ENCODE measurements at regions of chr15 and their contacts with region 1.

Region 1: GRCh38 chr15:80152180-80152845 is 486 bp upstream of the FAH start:
- DNase-seq: peak; percentile 46 to 86 (median 69)
- ATAC-seq: peak; percentile 84
- H3K4me3 ChIP-seq: peak overlapping the region; percentile 46
- H3K4me3 Mint-ChIP-seq: peak overlapping the region; percentile 73 to 97 (median 88)
- H3K27ac ChIP-seq: peak overlapping the region; percentile 64
- H3K27ac Mint-ChIP-seq: peak overlapping the region; percentile 70 to 90 (median 83)
- H3K4me1 ChIP-seq: peaks cover 0 to 7% of the 10 kb centered on the region in 2 donors
- H3K4me1 Mint-ChIP-seq: peaks cover 0 to 36% (median 22%) of the 10 kb centered on the region in 7 donors
- H3K27me3 ChIP-seq: no peaks in the 10 kb centered on the region
- H3K27me3 Mint-ChIP-seq: peaks cover 0 to 18% (median 0%) of the 10 kb centered on the region in 5 donors

Region 2: DNA sequence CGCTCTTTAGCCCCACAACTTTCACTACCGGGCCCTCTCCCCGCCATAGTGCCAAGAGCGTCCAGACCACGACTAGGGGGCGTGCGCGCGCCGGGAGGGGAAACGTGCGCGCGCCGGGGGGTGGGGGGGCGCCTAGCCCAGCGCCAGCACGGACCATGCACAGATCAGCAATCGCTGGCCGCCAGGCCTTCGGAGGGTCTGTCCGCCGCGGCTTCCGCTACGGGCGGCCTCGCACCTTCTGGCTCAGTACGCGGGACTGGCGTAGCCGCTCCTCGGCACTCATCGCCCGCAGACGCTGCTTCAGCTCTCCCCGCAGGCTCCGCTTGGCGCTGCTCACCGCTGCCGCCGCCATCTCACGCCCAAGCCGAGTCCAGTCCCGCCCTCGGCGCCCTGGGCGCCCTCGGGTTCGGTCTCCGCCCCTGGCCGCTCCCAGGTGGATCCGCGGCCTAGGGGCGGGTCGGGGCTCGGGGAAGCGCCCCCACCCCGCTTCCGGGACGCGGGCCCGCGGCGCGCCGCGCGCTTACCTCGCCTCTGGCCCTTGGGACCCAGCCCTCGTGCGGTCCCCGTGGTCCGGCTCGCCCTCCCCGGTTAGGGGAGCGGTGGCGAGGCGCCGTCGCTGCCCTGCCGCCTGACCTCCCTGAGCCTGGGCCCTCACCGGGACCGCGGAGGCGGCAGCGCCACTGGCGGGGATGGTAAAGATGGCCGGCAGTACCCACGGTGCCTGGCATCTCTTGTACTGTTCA is 255.5 kb before region 1 on chr15 and contains the start of gene MTHFS:
- CTCF ChIA-PET with region 1: interaction called, 3 read pairs
- POLR2A ChIA-PET with region 1: no interaction called
- intact Hi-C with region 1: loop called (anchors 1 kb)
- DNase-seq: peak; percentile 73 to 87 (median 83)
- ATAC-seq: peak; percentile 92
- H3K4me3 ChIP-seq: peak within 1 kb of the TSS; percentile 71
- H3K4me3 Mint-ChIP-seq: peak within 1 kb of the TSS; percentile 91 to 100 (median 99)
- H3K27ac ChIP-seq: peak within 1 kb of the TSS; percentile 92
- H3K27ac Mint-ChIP-seq: peak within 1 kb of the TSS; percentile 97 to 100 (median 100)
- H3K4me1 ChIP-seq: peaks cover 20 to 23% of the 10 kb centered on the region in 2 donors
- H3K4me1 Mint-ChIP-seq: peaks cover 28 to 49% (median 46%) of the 10 kb centered on the region in 7 donors
- H3K27me3 ChIP-seq: no peaks in the 10 kb centered on the region
- H3K27me3 Mint-ChIP-seq: no peaks in the 10 kb centered on the region
- total RNA-seq, gene MTHFS: 15.8 to 31.8 (median 20.3) TPM

Region 3: DNA sequence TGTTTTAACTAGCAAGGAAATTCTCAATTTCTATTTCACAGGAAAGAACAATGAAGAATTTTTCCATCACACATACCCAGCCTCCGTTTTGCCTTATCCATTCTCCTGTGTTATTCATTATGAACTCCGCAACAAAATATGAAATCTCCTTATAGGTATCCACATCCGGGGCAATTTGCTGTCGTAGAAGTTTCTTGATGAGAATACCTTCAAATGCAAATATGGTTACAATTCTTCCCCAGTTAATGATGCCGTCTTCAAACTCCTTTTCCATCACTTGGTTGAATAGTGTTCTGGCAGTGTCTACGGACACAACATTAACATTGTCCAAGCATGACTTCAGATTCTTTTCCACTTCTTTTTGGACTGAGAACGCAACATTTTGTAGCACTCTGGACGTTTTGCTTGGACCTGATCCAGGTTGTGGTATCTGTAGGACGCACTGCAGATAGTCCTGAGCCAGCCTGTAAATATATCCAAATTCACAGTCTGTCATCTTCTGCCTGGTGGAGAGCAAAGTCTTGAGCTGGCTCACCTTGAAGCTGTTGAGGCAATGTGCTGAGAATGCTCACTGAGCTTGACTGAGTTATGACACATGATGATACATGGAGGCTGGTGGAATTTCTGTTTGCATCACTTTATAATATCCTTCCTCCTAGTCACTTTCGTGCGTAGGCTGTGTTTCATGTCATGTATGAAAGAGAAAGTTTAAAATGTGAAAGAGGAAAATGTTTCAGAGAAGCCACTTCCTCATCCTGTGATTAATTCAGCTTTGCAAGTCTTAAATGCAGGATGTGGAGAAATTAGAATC is 181.5 kb before region 1 on chr15 and contains the start of gene BCL2A1:
- CTCF ChIA-PET with region 1: no interaction called
- POLR2A ChIA-PET with region 1: no interaction called
- intact Hi-C with region 1: loop called (anchors 2 kb)
- DNase-seq: peak; percentile 30 to 85 (median 80)
- ATAC-seq: peak; percentile 91
- H3K4me3 ChIP-seq: peak within 1 kb of the TSS; percentile 81
- H3K4me3 Mint-ChIP-seq: peak within 1 kb of the TSS; percentile 88 to 98 (median 94)
- H3K27ac ChIP-seq: peak within 1 kb of the TSS; percentile 75
- H3K27ac Mint-ChIP-seq: peak within 1 kb of the TSS; percentile 93 to 99 (median 95)
- H3K4me1 ChIP-seq: peaks cover 27 to 39% of the 10 kb centered on the region in 2 donors
- H3K4me1 Mint-ChIP-seq: peaks cover 41 to 66% (median 58%) of the 10 kb centered on the region in 7 donors
- H3K27me3 ChIP-seq: no peaks in the 10 kb centered on the region
- H3K27me3 Mint-ChIP-seq: no peaks in the 10 kb centered on the region
- total RNA-seq, gene BCL2A1: 27.3 to 119 (median 31.0) TPM

Region 4: DNA sequence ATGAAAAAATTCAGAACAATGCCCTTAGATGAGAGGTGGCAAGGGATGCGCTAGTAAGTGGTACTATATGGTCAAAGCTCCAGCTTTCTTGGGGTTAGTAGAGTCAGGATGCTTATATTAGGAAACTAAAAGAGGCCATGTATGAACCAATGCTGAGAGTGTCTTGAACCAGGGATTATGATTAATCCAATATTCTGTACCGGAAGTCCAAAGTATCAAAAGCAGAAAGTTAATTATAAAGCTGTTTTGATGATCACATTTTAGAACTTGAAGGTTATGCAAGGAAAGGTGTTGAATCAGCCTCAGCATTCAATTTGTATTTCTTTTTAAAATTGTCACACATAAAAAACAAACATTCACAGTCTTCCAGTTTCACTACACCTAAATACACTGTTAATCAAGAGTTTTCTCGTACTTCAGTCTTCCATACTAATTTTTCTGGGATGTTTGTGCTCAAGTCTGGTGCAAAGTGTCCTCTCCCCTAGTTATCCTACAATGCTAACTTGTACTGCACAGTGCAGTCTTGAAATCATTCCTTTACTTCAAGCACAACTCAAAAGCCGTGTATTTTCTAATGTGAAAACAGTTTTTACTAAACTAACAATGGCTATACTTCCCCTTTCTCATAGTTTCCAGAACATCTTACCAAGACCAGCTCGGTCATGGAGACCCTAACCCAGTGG is 10.3 kb before region 1 on chr15:
- CTCF ChIA-PET with region 1: no interaction called
- POLR2A ChIA-PET with region 1: no interaction called
- intact Hi-C with region 1: no loop called
- DNase-seq: no peak
- ATAC-seq: no peak
- H3K4me3 ChIP-seq: no peak overlapping the region
- H3K4me3 Mint-ChIP-seq: no peak overlapping the region
- H3K27ac ChIP-seq: no peak overlapping the region
- H3K27ac Mint-ChIP-seq: no peak overlapping the region
- H3K4me1 ChIP-seq: no peaks in the 10 kb centered on the region
- H3K4me1 Mint-ChIP-seq: no peaks in the 10 kb centered on the region
- H3K27me3 ChIP-seq: no peaks in the 10 kb centered on the region
- H3K27me3 Mint-ChIP-seq: peaks cover 0 to 21% (median 0%) of the 10 kb centered on the region in 5 donors

Region 5: DNA sequence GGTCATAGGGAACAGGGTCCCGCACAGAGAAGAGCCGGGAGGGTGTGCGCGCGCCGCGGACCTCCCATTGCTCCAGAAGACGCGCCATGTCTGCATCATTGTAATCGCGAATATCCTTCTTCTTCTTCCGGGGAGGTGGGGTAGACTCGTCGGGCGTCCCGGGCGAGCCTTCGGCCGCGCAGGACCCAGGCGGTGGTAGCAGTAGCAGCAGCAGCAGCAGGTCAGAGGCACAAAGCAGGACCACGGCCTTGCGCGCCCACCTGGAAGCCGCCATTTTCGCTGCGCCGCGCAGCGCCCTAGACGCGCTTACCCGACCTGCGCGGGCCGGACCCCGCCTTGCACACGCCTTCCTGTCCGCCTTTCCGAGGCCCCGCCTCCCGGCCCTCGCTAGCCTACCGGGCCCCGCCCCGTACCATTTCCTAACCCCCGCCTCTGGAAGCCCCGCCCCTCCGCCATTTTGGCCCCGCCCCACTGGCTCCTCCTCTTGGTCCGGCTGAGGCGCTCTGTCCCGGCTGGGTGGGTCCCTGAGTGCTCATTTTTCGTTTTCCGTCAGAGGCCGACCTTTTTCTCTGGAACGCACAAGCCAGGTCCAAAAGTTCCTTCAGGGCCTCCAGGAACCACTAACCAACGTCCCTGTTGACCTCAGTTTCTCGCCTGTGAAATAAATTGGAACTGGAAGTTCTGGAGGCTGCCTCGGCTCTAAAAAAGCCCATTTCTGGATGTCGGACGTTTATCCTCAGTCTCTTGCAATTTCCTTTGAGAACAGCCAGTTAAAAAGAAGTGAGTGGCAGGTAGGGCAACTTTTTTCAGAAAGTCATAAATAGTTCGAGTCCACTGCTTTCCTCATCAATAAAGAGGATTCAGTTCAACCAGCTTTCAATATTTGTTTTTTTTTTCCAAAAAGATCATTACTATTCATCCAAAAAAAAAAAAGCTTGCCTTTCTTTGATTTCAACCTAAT is 837.5 kb after region 1 on chr15 and contains the start of gene MESD:
- CTCF ChIA-PET with region 1: no interaction called
- POLR2A ChIA-PET with region 1: no interaction called
- intact Hi-C with region 1: loop called in 1 of 2 experiments (anchors 2 kb)
- DNase-seq: peak; percentile 89 to 97 (median 93)
- ATAC-seq: peak; percentile 99
- H3K4me3 ChIP-seq: peak within 1 kb of the TSS; percentile 95
- H3K4me3 Mint-ChIP-seq: peak within 1 kb of the TSS; percentile 95 to 100 (median 98)
- H3K27ac ChIP-seq: peak within 1 kb of the TSS; percentile 90
- H3K27ac Mint-ChIP-seq: peak within 1 kb of the TSS; percentile 92 to 99 (median 99)
- H3K4me1 ChIP-seq: peaks cover 28 to 45% of the 10 kb centered on the region in 2 donors
- H3K4me1 Mint-ChIP-seq: peaks cover 37 to 68% (median 64%) of the 10 kb centered on the region in 7 donors
- H3K27me3 ChIP-seq: no peaks in the 10 kb centered on the region
- H3K27me3 Mint-ChIP-seq: no peaks in the 10 kb centered on the region
- total RNA-seq, gene MESD: 17.1 to 42.5 (median 38.3) TPM

Region 6: DNA sequence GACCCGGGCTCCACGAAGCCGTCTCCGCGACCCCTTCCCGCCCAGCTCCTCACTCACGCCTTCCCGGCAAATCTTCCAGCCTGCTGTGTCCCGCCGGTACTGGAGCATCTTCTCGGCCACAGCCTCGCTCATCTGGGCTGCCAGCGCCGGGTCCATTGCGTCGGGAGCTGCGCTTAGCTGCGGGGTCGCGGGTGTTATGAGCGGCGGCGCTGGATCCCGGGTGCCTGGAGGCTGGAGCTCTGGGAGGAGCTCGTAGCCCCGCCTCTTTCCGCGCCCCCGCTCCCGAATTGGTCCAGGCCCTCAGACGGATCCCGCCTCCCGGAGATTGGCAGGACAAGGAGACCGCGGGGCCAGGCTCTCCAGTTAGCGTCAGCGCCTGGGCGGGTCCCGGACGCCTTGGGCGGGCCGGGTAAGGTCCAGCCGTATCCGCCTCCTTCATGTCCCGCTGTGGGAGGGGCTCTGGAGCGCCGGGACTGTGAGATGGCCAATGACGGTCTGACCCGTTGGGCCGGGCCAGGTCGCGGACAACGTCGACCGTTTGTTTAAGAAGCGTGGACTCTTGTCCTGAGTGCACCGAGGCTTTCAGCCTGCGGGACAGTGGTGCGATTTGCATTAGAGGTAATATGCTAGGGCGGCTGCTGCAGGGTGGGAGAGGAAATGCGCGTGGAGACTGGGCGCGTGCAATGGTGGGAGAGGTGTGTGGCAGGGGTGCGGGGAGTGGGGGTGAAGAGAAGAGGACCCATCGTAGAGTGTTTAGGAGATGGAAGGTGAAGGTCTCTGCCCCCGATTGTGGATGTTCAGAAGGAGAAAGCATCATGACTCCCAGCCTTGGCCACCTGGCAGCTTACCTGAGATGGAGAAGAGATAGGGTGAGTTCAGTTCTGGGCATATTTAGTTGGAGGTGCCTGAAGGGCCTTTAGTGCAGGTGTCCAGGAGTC is 1171.9 kb after region 1 on chr15 and contains the start of gene STARD5:
- CTCF ChIA-PET with region 1: no interaction called
- POLR2A ChIA-PET with region 1: no interaction called
- intact Hi-C with region 1: loop called in 1 of 2 experiments (anchors 5 kb)
- DNase-seq: peak; percentile 82 to 97 (median 92)
- ATAC-seq: peak; percentile 99
- H3K4me3 ChIP-seq: peak within 1 kb of the TSS; percentile 86
- H3K4me3 Mint-ChIP-seq: peak within 1 kb of the TSS; percentile 90 to 98 (median 94)
- H3K27ac ChIP-seq: peak within 1 kb of the TSS; percentile 78
- H3K27ac Mint-ChIP-seq: peak within 1 kb of the TSS; percentile 87 to 97 (median 92)
- H3K4me1 ChIP-seq: peaks cover 5 to 20% of the 10 kb centered on the region in 2 donors
- H3K4me1 Mint-ChIP-seq: peaks cover 31 to 65% (median 60%) of the 10 kb centered on the region in 7 donors
- H3K27me3 ChIP-seq: no peaks in the 10 kb centered on the region
- H3K27me3 Mint-ChIP-seq: no peaks in the 10 kb centered on the region
- total RNA-seq, gene STARD5: 5.0 to 11.7 (median 10.1) TPM

Measured in naive thymus-derived CD4-positive, alpha-beta T cell (primary cell).